ENCODE measurements at regions of chr16 and their contacts with region 1.

Region 1: DNA sequence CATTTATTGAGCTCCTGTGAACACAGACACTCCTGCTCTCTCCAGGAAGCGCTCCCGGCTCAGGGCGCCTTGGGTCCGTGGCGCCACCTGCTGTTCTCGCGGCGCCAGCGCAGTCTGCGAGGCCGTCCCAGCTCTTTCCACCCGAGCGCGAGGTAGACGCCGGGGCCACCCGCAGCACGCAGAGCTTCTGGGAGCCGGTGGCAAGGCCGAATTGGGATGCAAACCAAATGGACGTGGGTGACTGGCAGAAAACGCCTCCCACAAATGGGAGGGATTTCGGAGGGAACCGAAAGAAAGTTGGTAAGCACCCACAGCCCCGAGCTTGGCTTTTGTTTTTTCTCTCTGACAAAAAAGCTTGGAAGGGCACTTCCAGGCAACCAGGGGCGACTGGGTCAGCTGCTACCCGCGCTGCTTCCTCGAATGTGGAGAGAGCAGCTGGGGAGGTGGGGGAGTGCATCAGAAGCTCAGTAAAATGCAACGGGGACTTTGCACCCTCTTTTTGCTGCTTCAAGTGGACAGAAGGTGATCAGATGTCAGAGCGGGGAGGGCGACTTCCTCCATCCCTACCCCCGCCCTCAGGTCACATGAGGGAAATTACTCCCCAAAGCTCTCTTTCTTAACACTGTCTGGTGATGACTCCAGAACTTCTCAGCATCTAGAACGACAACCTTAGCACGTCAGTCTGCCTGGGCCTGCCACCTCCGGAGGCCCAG is 13.5 kb upstream of the N4BP1 start:
- DNase-seq: peak; percentile 78
- H3K4me3 ChIP-seq: peak overlapping the region; percentile 20 to 33
- H3K27ac ChIP-seq: peak overlapping the region; percentile 34 to 55
- H3K4me1 ChIP-seq: no peaks in the 10 kb centered on the region
- H3K27me3 ChIP-seq: no peaks in the 10 kb centered on the region
- CTCF ChIP-seq: peak; percentile 90 to 98 (median 96)
- POLR2A ChIP-seq: peak; percentile 34

Region 2: DNA sequence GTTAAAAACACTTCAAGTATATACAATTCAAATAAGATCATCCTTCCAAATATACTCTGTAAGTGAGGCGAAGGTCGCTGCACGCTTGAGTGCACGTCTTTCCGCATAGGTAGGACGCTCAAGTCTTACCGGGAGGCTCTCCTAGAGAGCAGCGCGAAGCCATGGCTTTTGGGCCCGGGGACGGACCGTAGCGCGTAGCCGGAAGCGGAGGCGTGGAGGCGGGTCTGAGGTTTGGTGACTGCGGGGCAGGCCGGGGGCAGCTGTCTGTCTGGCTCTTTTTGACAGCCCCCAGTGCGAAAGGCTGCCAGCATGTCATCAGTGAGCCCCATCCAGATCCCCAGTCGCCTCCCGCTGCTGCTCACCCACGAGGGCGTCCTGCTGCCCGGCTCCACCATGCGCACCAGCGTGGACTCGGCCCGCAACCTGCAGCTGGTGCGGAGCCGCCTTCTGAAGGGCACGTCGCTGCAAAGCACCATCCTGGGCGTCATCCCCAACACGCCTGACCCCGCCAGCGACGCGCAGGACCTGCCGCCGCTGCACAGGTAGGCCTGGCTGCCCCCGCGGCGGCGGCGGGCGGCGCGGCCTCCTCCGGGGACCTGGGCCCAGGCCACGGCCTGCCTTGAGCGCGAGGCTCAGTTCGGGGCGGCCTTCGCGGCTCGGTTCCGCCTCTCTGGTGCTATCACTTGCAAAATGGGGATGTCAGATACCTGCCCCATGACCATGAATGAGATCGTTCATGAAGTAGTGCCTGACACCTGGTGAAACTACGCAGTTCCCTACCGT is 379.2 kb before region 1 on chr16 and contains the start of gene LONP2:
- intact Hi-C with region 1: loop called (anchors 10 kb)
- DNase-seq: peak; percentile 88
- H3K4me3 ChIP-seq: peak within 1 kb of the TSS; percentile 79
- H3K27ac ChIP-seq: peak within 1 kb of the TSS; percentile 81 to 82
- H3K4me1 ChIP-seq: peaks cover 8% of the 10 kb centered on the region
- H3K27me3 ChIP-seq: no peaks in the 10 kb centered on the region
- CTCF ChIP-seq: no peak
- POLR2A ChIP-seq: peak; percentile 36
- total RNA-seq, gene LONP2: 74.6 to 81.0 TPM

Region 3: GRCh38 chr16:48546774-48547173 is 76.7 kb before region 1 on chr16:
- intact Hi-C with region 1: no loop called
- DNase-seq: no peak
- H3K4me3 ChIP-seq: no peak overlapping the region
- H3K27ac ChIP-seq: no peak overlapping the region
- H3K4me1 ChIP-seq: no peaks in the 10 kb centered on the region
- H3K27me3 ChIP-seq: no peaks in the 10 kb centered on the region
- CTCF ChIP-seq: no peak
- POLR2A ChIP-seq: no peak

Measured in prostate gland (tissue), 2 donors.